ENCODE measurements at regions of chr1 and their contacts with region 1.

Region 1: GRCh38 chr1:168234846-168235547 is 9.2 kb downstream of the SFT2D2 start:
- DNase-seq: peak; percentile 56
- ATAC-seq: peak; percentile 98
- H3K4me3 ChIP-seq: no peak overlapping the region
- H3K27ac ChIP-seq: no peak overlapping the region
- H3K4me1 ChIP-seq: peaks cover 33% of the 10 kb centered on the region
- H3K27me3 ChIP-seq: no peaks in the 10 kb centered on the region
- CTCF ChIP-seq: peak; percentile 75
- EP300 ChIP-seq: no peak
- POLR2A ChIP-seq: no peak
- RAD21 ChIP-seq: no peak

Region 2: GRCh38 chr1:167913863-167914502 is 321.0 kb before region 1 on chr1 and contains the start of gene ADCY10:
- CTCF ChIA-PET with region 1: no interaction called
- POLR2A ChIA-PET with region 1: no interaction called
- in situ Hi-C with region 1: no loop called
- intact Hi-C with region 1: no loop called
- DNase-seq: peak; percentile 44
- ATAC-seq: peak; percentile 48
- H3K4me3 ChIP-seq: 0 out of 6 replicates have a peak within 1 kb of the TSS, but pooled peaks of 1 of the 3 experiments have one; percentile 5
- H3K27ac ChIP-seq: peak within 1 kb of the TSS; percentile 36
- H3K4me1 ChIP-seq: peaks cover 54% of the 10 kb centered on the region
- H3K27me3 ChIP-seq: no peaks in the 10 kb centered on the region
- CTCF ChIP-seq: no peak
- EP300 ChIP-seq: peak in 1 of 2 experiments; percentile 70; a peak in 1 of 4 replicates
- POLR2A ChIP-seq: peak in 1 of 2 experiments; percentile 37; a peak in 1 of 4 replicates
- RAD21 ChIP-seq: no peak
- total RNA-seq, gene ADCY10: 0.02 and 0.03 TPM in 2 replicates

Region 3: DNA sequence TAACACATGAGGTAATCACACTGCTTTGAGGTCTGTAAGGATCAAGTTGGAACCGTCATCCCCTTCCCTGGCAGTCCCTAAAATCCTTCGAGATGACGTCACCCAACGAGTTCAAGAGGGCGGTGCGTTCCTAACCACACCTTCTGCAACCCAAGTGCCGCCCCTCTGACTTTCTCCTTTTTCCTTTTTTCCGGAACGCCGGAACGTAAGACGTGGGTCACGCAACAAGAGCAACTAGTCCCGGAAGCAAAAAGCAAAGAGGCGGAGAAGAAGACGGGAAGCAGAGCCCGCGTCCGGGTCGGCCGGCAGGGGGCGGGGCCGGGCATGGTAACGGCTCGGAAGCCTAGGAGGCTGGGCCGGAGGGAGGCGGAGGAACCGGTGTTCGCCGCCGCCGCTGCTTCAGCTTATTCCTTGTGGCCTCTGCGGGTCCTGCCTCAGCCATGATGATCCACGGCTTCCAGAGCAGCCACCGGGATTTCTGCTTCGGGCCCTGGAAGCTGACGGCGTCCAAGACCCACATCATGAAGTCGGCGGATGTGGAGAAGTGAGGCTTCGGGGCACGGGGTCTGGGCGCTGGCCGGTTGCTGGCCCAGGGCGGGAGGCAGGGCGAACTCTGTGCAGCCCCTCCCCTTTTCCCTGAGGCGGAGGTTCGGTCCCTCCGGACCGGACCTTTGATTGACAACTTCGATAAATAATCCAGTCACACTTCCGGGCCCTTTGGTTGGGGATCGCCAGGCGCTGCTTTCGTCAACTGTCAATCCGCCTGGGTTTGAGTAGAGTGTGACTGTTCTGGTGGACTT is 56.2 kb before region 1 on chr1 and contains the start of gene TIPRL:
- CTCF ChIA-PET with region 1: interaction called, 4 read pairs
- POLR2A ChIA-PET with region 1: no interaction called
- in situ Hi-C with region 1: no loop called
- intact Hi-C with region 1: loop called (anchors 5 kb)
- DNase-seq: peak; percentile 95
- ATAC-seq: peak; percentile 96
- H3K4me3 ChIP-seq: peak within 1 kb of the TSS; percentile 76 to 85 (median 83)
- H3K27ac ChIP-seq: peak within 1 kb of the TSS; percentile 68
- H3K4me1 ChIP-seq: peaks cover 11% of the 10 kb centered on the region
- H3K27me3 ChIP-seq: no peaks in the 10 kb centered on the region; a peak in 1 of 5 replicates
- CTCF ChIP-seq: peak; percentile 83
- EP300 ChIP-seq: no peak
- POLR2A ChIP-seq: peak; percentile 67 to 70
- RAD21 ChIP-seq: peak; percentile 74
- total RNA-seq, gene TIPRL: 22.8 and 33.5 TPM in 2 replicates

Region 4: GRCh38 chr1:168216171-168216570 is 18.8 kb before region 1 on chr1:
- CTCF ChIA-PET with region 1: no interaction called
- POLR2A ChIA-PET with region 1: no interaction called
- in situ Hi-C with region 1: no loop called
- intact Hi-C with region 1: no loop called
- DNase-seq: no peak
- ATAC-seq: no peak
- H3K4me3 ChIP-seq: no peak overlapping the region
- H3K27ac ChIP-seq: no peak overlapping the region
- H3K4me1 ChIP-seq: no peaks in the 10 kb centered on the region
- H3K27me3 ChIP-seq: 0 out of 5 replicates have a peak, but pooled peaks cover 1 to 3% of the 10 kb centered on the region in 2 experiments
- CTCF ChIP-seq: no peak
- EP300 ChIP-seq: no peak
- POLR2A ChIP-seq: no peak
- RAD21 ChIP-seq: no peak